GM10248 (cell line): ENCODE measurements at regions of chr20 and their contacts with region 1.

Region 1: DNA sequence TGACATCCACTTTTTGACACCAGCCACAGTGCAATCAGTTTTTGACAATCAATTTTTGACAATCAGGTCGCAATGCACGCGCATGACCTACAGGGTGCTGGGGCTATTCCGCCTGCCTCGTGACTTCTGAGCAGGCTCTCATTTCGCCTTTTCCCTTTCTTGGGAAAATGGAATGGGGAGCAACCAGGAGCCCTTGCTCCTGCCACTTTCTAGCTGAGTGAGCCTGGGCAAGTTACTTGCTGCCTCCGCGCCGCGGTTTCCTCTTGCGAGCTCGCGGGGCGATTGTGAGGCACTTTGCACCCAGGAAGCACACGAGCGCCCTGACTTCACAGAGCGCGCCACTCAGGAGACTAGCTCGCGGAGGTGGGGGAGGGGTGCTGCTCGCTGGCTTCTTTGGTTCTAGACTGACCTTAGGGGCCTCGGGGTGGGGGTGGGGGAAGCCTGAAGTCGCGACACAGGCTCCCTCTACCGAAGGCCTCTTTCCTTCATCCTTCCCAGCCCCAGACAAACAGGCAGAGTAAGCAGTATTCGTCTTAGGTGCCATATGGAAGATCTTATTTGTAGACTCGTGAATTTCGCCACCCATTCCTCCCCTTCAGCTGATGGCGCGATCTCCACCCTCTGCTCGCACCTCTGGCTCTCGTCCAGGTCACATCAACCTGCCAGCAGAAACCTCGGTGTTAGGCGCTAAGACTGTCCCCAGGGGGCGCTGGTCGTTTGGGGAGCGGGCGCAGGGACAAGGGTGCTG is 4.6 kb downstream of the TP53TG5 start:
- DNase-seq: peak; percentile 84
- CTCF ChIP-seq: peak; percentile 93

Region 2: GRCh38 chr20:45193331-45193730 is 180.2 kb before region 1 on chr20:
- CTCF ChIA-PET with region 1: no interaction called
- POLR2A ChIA-PET with region 1: no interaction called
- DNase-seq: no peak
- CTCF ChIP-seq: no peak

Region 3: GRCh38 chr20:45246109-45246508 is 127.4 kb before region 1 on chr20:
- CTCF ChIA-PET with region 1: no interaction called
- POLR2A ChIA-PET with region 1: no interaction called
- DNase-seq: no peak
- CTCF ChIP-seq: no peak

Region 4: DNA sequence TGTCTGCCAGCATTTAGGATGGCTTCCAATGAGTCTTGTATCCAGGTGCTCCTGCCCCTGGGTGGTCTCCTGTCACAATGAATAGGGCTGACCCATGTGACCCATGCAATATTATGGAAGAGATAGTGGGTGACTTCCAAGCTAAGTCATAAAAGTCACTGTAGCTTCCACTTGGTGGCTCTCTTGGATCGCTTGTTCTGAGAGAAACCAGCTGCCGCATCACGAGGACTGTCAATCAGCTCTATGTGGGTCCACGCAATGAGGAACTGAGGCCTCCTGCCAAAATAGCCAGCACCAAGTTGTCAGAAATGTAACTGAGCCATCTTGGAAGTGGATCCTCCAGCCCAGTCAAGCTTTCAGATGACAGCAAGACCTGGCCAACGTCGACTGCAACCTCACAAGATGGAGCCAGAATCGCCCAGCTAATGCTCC is 50.6 kb before region 1 on chr20:
- CTCF ChIA-PET with region 1: interaction called, 15 read pairs
- POLR2A ChIA-PET with region 1: no interaction called
- DNase-seq: peak; percentile 63
- CTCF ChIP-seq: peak; percentile 15

Region 5: DNA sequence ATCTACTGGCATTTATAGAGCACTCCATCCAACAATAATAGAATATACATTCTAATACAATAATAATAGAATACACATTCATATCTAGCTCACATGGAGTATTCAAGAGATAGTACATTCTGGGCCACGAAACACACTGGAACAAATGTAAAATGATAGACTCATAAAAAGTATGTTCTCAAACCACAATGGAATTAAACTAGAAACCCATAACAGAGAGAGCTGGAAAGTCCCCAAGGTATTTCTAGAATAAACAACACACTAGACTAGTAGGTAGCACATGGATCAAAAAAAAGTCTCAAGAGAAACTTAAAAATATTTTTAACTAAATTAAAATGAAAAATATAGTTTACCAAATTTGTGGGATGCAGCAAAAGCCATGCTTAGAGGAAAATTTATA is 13.7 kb after region 1 on chr20:
- CTCF ChIA-PET with region 1: interaction called, 30 read pairs
- POLR2A ChIA-PET with region 1: interaction called, 5 read pairs
- DNase-seq: no peak
- CTCF ChIP-seq: no peak

Region 6: DNA sequence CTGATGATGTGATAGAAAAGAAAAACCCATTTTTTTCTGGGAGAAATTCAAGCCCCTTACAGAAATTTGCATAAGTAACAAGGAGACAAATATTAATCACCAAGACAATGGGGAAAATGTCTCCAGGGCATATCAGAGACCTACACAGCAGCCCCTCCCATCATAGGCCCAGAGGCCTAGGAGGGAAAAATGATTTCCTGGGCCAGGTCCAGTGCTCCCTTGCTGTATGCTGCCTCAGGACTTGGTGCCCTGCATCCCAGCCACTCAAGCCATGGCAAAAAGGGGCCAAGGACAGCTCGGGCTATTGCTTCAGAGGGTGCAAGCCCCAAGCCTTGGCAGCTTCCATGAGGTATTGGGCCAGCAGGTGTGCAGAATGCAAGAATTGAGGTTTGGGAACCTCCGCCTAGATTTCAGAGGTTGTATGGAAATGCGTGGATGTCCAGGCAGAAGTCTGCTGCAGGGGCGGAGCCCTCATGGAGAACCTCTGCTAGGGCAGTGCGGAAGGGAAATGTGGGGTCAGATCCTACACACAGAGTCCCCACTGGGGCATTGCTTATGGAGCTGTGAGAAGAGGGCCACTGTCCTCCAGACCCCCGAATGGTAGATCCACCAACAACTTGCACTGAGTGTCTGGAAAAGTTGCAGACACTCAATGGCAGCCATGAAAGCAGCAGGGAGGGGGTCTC is 27.0 kb after region 1 on chr20:
- CTCF ChIA-PET with region 1: interaction called, 33 read pairs
- POLR2A ChIA-PET with region 1: no interaction called
- DNase-seq: no peak
- CTCF ChIP-seq: no peak

Region 7: DNA sequence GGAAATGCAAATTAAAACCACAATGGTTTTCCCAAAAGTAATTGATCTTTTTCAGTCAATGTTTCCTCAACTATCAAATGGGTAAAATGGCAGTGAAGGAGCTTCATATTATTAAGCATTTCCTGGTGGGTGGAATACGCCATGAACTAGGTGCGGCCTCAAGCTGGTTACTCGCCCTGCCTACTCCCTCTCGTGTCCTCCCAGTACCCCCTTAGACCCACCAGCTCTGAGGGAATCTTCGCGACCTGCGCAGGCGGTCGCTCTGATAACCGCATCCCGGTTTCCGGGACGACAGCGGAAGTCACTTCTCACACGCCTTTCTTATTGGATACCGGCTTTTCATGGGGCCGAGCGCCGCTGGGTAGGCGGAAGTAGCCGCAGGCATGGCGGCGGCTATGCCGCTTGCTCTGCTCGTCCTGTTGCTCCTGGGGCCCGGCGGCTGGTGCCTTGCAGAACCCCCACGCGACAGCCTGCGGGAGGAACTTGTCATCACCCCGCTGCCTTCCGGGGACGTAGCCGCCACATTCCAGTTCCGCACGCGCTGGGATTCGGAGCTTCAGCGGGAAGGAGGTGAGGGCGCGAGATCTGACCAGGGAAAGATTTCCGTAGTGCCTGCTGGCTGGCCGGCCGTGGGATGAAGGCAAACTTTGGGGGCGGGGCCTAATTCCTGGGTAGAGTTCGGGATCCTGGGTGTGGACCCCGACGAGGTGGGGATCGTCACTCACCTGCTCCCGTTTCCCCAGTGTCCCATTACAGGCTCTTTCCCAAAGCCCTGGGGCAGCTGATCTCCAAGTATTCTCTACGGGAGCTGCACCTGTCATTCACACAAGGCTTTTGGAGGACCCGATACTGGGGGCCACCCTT is 42.5 kb after region 1 on chr20 and contains the start of gene PIGT:
- CTCF ChIA-PET with region 1: interaction called, 69 read pairs
- POLR2A ChIA-PET with region 1: interaction called, 4 read pairs
- DNase-seq: peak; percentile 90
- CTCF ChIP-seq: no peak

Region 8: GRCh38 chr20:45456632-45457031 is 83.1 kb after region 1 on chr20:
- CTCF ChIA-PET with region 1: interaction called, 15 read pairs
- POLR2A ChIA-PET with region 1: no interaction called
- DNase-seq: peak; percentile 35
- CTCF ChIP-seq: peak; percentile 36

Region 9: DNA sequence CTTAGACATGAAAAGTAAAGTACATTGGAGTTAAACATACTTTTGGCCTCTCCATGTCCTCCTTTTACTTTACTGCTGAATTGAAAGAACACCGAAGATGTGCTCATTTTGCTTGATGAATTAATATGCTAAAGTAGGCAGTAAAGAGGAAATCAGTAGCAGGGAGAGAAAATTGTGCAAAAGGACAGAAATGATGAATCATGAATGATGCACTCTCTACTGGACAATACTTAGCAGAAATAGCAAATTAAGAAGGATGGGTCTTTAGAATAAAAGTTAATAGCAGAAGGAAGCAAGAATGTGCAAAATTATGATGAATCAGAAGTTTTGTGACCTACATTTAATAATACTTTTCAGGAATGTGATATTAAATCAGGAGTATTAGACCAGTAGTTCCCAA is 150.3 kb after region 1 on chr20:
- CTCF ChIA-PET with region 1: no interaction called
- POLR2A ChIA-PET with region 1: no interaction called
- DNase-seq: no peak
- CTCF ChIP-seq: no peak